Motor neuron (in vitro differentiated cells): ENCODE measurements at regions of chr10 and their contacts with region 1.

Region 1: GRCh38 chr10:102583435-102584417 is 60.6 kb upstream of the TRIM8 start:
- ATAC-seq: peak; percentile 96 to 99 (median 98)
- H3K4me3 ChIP-seq: no peak overlapping the region
- H3K27ac ChIP-seq: no peak overlapping the region
- H3K4me1 ChIP-seq: peaks cover 6 to 12% of the 10 kb centered on the region in 2 donors

Region 2: GRCh38 chr10:102394079-102394800 is 189.5 kb before region 1 on chr10:
- in situ Hi-C with region 1: loop called in 2 of 9 experiments (anchors 25 kb)
- ATAC-seq: peak; percentile 78 to 89 (median 83)
- H3K4me3 ChIP-seq: peak overlapping the region; percentile 37 to 77 (median 61)
- H3K27ac ChIP-seq: peak overlapping the region in 1 of 2 donors; percentile 25
- H3K4me1 ChIP-seq: peaks cover 0 to 2% of the 10 kb centered on the region in 2 donors

Region 3: DNA sequence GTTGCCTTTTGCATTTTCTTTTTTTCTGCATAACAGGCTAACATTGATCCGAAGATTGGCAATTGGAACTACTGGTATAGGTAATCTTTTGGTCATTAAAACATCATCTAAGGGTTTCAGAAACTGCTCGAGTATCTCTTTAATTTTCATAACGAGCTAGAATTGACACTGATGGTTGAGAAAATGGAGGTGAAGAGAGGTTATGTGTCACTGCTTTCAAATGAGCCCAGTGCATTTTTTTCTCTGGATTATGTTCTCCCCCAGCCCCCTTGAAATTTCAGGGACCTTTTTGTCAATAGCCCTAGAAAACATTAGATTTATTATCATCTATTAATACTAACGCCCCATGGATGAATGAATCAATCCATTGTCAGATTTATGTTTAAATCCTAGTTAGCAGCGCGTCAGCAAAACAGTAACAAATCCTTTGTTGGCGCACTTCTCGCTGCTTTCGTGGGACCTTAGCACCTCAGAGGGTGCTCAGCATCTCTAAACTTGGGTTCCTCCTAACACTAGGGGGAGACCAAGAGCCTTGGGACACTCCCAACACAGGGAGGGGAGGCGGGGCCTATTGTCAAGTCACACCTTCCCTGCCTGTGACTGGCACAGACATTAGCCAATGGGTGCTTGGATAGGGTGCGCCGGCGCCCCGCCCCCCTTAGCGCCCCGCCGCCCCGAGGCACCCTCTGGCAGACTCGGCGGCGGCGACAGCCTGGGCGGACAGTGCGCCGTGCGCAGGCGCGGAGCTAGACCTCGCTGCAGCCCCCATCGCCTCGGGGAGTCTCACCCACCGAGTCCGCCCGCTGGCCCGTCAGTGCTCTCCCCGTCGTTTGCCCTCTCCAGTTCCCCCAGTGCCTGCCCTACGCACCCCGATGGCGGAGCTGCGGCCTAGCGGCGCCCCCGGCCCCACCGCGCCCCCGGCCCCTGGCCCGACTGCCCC is 80.2 kb before region 1 on chr10 and contains the start of gene SUFU:
- in situ Hi-C with region 1: loop called in 1 of 9 experiments (anchors 10 kb)
- ATAC-seq: peak; percentile 47 to 73 (median 68)
- H3K4me3 ChIP-seq: peak within 1 kb of the TSS; percentile 80 to 89 (median 86)
- H3K27ac ChIP-seq: peak within 1 kb of the TSS; percentile 56 to 66
- H3K4me1 ChIP-seq: peaks cover 0 to 5% of the 10 kb centered on the region in 2 donors
- total RNA-seq, gene SUFU: 2.9 to 9.7 (median 4.8) TPM